Activated naive CD4-positive, alpha-beta T cell treated with anti-CD3 and anti-CD28 coated beads for 36 hours (primary cell): ENCODE measurements at regions of chr4 and their contacts with region 1.

Region 1: DNA sequence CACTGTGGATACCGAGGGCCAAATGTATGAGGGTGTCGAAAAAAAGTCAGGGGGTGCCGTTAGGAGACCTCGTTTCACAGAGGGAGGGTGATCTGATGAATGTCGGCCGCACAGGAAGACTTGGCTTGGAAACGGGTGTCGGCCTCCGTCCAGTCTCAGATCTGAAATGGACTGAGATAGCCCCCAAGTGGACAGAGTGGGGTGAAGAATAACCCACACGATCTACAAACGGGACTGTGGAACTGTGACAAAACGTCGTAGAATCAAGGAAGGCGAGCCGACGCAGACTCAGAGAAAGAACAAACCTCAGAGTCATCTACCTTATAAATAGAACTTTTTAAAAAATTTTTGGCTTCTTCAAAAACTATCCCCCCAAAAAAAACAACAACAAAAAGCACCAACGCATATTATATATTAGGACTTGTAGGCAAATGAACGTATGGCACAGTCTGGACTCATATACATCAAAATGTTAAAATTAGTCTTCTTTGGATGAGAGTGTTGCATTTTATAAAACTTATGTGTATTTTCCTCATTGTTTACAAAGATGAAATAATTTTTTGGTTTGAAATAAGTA is 63.8 kb upstream of the IRF2 start:
- DNase-seq: peak; percentile 79
- H3K4me3 Mint-ChIP-seq: peak overlapping the region; percentile 97
- H3K27ac Mint-ChIP-seq: peak overlapping the region; percentile 96
- H3K4me1 Mint-ChIP-seq: peaks cover 35% of the 10 kb centered on the region
- H3K27me3 Mint-ChIP-seq: no peaks in the 10 kb centered on the region

Region 2: DNA sequence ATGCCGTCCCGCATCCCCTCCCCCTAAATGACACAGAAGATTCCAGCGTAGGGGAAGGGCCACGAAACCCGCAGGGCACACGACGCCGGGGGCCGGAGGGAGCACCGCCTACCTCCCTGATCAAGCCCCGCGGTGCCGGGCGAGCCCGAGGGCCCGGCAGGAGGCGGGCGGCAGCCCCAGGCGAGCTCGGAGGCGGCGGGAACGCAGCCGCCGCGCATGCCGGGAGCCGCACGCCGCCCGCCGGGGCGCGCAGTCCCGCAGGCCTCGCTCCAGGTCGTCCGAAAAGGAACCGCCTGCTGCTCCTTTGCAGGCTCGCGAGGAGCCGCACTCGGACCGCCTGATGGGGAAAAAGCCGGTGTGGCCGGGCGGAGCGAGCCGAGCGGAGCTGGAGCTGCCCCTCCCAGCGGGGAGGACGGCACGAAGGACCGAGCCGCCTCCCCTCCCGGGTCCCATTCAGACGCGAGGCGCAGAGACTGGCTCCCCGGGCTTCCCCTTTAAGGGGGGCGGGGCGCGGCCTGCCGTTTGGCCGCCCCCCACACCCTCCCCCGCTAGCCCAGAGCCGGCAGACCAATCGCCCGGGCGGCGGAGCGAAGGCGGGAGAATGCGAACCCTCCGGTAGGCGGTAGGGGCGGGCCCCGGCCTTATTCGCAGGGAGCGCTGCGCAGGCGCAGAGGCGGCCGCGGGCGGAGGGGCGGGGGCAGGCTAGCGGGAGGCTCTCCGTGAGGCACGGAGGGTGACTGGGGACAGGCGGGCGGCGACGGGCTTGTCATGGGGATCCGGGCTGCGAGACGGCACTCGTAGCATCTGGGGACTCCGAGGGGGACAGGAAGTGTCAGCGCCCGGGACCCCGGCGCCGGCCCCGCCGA is 1033.8 kb before region 1 on chr4:
- CTCF ChIA-PET with region 1: no interaction called
- intact Hi-C with region 1: loop called (anchors 2 kb)
- DNase-seq: peak; percentile 98
- H3K4me3 Mint-ChIP-seq: peak overlapping the region; percentile 91
- H3K27ac Mint-ChIP-seq: peak overlapping the region; percentile 93
- H3K4me1 Mint-ChIP-seq: peaks cover 39% of the 10 kb centered on the region
- H3K27me3 Mint-ChIP-seq: no peaks in the 10 kb centered on the region

Region 3: DNA sequence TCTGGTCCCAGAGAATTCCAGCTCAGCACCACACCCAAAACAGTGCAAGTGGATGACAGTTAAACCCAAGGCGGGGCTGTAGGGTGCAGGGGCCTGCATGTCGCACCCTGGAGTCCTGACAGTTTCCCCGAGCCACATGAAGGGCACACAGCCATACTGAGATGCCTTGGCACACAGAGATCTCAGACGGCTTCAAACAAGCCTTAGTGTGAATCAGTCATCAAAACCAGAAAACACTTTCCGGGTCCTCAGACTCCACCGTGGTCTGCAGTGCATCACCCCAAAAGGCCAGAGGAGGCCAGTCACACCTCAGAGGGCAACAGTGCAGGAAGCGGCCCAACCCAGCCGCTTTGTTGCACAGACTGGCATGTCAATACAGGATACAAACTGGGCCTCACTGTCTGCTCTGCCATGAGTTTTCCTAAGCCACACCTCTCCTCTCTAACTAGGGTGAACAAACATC is 255.8 kb before region 1 on chr4:
- CTCF ChIA-PET with region 1: interaction called, 3 read pairs
- intact Hi-C with region 1: loop called (anchors 1 kb)
- DNase-seq: peak; percentile 82
- H3K4me3 Mint-ChIP-seq: no peak overlapping the region
- H3K27ac Mint-ChIP-seq: peak overlapping the region; percentile 85
- H3K4me1 Mint-ChIP-seq: peaks cover 64% of the 10 kb centered on the region
- H3K27me3 Mint-ChIP-seq: peaks cover 4% of the 10 kb centered on the region

Region 4: DNA sequence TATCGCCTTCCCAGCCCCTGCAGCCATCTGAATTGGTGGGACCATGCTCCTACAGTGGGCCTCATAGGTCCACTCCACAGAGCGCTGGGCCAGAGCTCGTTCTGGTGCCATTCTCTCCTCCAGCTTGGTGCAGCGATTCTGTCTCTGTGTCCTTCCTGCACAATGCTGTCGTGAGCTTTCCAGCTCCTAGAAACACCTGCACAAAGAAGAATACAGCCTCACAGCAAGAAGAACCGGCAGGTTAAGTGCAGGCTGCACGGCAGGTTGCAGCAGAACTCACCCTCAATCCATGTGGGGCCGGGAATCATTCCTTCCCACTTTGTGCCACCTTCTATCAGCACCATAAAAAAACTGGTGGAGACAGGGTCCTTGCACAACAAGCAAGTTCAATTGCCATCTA is 219.3 kb before region 1 on chr4:
- CTCF ChIA-PET with region 1: no interaction called
- intact Hi-C with region 1: loop called (anchors 1 kb)
- DNase-seq: no peak
- H3K4me3 Mint-ChIP-seq: no peak overlapping the region
- H3K27ac Mint-ChIP-seq: no peak overlapping the region
- H3K4me1 Mint-ChIP-seq: peaks cover 36% of the 10 kb centered on the region
- H3K27me3 Mint-ChIP-seq: peaks cover 2% of the 10 kb centered on the region

Region 5: DNA sequence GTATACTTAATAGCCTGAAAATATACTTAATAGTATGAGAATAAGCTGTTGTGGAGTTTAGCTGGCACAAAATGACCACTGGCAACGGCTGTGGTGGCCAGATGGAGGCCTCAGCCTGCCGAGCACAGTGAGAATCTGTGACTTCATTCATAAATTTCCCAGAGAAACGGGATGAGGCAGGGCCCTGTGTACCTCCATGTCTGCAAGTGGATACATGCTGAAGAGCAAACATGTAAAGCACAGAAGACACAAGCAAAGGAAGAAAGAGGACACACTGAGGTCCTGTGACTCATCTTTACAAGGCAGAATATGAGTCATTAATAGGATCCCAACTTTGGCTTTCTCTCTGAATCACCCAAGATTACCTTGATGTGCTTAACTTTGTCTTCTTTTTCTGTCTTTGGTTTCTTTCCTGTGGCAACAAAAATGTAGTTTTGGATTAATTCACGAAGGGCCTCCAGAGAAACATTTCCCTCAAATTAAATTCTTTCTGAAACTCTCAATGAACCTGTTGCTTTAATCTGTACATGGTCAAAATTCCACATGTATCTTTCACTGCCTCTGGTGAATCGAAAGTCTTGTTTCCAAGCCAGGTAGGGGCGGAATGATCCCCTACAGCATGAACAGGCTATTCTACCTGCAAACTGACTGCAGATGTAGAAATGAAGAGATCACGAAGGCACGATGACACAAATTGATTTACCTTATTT is 120.2 kb before region 1 on chr4:
- CTCF ChIA-PET with region 1: interaction called, 3 read pairs
- intact Hi-C with region 1: loop called (anchors 1 kb)
- DNase-seq: peak; percentile 27
- H3K4me3 Mint-ChIP-seq: no peak overlapping the region
- H3K27ac Mint-ChIP-seq: peak overlapping the region; percentile 73
- H3K4me1 Mint-ChIP-seq: peaks cover 84% of the 10 kb centered on the region
- H3K27me3 Mint-ChIP-seq: no peaks in the 10 kb centered on the region

Region 6: DNA sequence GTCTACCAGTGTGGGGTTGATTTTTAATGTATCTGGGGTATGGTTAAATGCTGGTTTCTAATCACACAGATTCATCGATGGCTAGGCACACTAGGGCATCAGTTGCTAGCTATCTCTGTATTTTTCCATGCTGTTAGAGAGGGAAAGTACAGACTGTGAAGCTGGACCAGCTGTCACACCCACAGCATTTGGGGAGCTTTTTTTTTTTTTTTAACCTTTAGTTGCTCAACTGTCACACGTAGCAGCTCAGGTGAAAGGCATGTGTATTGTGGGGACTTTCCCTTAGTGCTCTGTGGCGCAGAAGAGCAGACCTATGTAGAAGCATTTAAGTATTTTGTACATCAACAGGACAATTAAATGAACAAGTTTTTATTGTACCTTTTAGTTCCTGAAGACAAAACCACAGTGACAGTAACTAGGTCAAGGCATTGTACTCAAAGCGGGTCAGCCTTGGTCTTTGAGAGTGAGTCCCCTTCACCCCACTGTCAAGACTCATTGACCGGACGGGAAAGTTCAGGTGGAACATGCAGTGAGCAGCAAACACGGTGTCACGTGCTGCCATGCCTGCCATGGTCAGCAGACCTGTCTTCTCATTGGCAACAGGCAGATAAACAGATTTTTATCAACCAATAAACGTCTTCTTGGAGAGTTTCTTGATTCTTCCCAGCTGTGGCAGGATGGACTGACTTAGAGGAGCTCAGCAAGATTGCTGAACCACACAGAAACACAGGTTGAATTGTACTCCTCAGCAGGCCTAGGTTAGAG is 45.8 kb after region 1 on chr4:
- CTCF ChIA-PET with region 1: no interaction called
- intact Hi-C with region 1: loop called (anchors 2 kb)
- DNase-seq: peak; percentile 62
- H3K4me3 Mint-ChIP-seq: no peak overlapping the region
- H3K27ac Mint-ChIP-seq: peak overlapping the region; percentile 20
- H3K4me1 Mint-ChIP-seq: peaks cover 25% of the 10 kb centered on the region
- H3K27me3 Mint-ChIP-seq: no peaks in the 10 kb centered on the region

Region 7: DNA sequence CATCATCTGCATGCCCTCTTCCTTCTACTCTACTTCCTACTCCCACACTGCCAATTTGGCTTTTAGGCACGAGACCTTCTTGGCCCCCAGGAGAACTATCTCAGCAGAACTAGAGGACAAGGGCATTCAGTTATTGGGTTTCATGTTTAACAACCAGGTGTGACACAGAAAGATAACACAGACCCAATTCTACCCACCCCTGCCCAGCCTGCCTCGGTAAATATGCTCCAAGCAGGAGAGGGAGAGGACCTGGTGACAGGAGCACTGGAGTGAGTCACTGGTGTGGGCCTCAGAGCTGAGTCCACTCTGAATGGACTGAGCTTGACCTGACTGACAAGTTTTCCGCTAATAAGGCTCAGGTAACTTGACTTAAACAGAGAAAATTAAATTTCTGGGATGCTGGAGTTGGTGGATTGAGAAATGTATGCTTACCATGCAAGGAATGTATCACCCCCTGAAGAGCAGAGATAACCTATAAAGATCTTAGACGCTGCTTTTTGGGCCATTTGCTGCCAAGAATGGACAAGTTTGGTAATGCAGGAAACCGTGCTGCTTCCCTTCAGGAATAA is 58.6 kb after region 1 on chr4:
- CTCF ChIA-PET with region 1: no interaction called
- intact Hi-C with region 1: no loop called
- DNase-seq: no peak
- H3K4me3 Mint-ChIP-seq: no peak overlapping the region
- H3K27ac Mint-ChIP-seq: peak overlapping the region; percentile 30
- H3K4me1 Mint-ChIP-seq: peaks cover 13% of the 10 kb centered on the region
- H3K27me3 Mint-ChIP-seq: no peaks in the 10 kb centered on the region